Activated CD4-positive, alpha-beta T cell treated with anti-CD3 and anti-CD28 coated beads, Interleukin-2, amount 10 ng/mL, durations not matched to agents 24 days and 14 days (primary cell): ENCODE measurements at regions of chr7 and their contacts with region 1.

Region 1: DNA sequence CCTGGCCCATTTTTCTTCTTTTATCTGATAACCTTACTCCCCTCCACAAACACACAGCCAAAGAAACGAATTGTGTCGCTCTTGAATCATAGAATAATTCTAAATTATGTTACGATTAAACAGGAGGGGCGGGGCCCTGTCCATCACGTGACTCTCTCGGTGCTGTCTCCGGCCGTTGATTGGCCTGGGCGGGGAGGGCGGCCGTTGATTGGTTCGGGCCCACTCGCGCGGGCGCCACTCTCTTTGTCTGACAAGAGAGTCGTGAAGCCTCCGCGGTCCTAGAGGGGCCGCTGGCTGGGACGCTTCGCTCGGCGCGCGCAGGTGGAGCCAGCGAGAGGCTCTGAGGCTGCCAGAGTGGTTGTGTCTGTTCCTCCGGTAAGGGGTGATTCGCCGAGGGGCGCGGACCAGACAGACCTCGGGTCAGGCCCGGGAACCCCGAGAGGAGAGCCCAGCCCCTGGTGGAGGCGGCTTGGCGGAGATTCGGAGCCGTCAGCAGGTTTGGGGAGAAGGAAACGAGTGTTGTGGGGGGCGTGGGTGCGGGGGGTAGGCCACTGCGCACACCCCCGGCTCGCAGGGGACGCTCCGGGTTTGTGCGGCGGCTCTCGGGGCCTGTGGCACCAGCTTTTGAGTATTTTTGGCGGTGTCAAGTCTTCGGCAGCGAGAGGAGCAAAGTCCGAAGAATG is at the start of gene ZNF789:
- DNase-seq: peak; percentile 99
- H3K4me3 Mint-ChIP-seq: peak within 1 kb of the TSS; percentile 100
- H3K27ac Mint-ChIP-seq: peak within 1 kb of the TSS; percentile 93
- H3K4me1 Mint-ChIP-seq: peaks cover 28% of the 10 kb centered on the region
- H3K27me3 Mint-ChIP-seq: peaks cover 1% of the 10 kb centered on the region
- total RNA-seq, gene ZNF789: 22.6 and 23.6 TPM in 2 replicates

Region 2: DNA sequence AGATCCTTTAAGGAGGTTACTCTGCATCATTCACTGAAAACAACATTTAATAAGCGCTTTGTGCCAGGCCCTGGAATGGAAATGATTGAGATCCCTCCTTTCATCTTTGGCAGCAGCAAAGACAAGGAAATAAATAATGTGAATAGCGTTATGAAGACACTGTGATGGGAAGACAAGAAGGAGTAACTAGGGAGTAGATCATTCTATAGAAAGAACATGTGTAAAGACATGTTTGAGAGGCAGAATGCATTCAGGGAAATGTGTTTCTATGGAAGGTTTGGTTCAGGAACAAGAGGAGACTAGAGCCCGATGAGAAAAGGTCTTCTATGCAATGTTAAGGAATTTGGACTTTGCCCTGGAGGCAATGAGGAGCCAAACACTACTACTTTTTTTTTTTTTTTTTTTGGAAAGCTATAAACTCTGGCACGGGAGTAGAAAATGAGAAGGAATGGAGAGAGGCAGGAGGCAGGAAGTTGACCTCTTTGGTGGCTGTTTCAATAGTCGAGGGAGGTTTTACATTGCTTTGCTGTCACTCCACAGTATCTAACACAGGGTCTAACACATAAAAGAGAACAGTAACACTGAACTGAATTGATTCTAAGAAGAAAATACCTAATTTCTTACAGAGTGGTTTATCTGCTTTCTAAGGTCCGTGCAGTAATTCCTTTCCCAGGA is 373.7 kb before region 1 on chr7:
- intact Hi-C with region 1: no loop called
- DNase-seq: no peak
- H3K4me3 Mint-ChIP-seq: no peak overlapping the region
- H3K27ac Mint-ChIP-seq: no peak overlapping the region
- H3K4me1 Mint-ChIP-seq: peaks cover 13% of the 10 kb centered on the region
- H3K27me3 Mint-ChIP-seq: no peaks in the 10 kb centered on the region

Region 3: DNA sequence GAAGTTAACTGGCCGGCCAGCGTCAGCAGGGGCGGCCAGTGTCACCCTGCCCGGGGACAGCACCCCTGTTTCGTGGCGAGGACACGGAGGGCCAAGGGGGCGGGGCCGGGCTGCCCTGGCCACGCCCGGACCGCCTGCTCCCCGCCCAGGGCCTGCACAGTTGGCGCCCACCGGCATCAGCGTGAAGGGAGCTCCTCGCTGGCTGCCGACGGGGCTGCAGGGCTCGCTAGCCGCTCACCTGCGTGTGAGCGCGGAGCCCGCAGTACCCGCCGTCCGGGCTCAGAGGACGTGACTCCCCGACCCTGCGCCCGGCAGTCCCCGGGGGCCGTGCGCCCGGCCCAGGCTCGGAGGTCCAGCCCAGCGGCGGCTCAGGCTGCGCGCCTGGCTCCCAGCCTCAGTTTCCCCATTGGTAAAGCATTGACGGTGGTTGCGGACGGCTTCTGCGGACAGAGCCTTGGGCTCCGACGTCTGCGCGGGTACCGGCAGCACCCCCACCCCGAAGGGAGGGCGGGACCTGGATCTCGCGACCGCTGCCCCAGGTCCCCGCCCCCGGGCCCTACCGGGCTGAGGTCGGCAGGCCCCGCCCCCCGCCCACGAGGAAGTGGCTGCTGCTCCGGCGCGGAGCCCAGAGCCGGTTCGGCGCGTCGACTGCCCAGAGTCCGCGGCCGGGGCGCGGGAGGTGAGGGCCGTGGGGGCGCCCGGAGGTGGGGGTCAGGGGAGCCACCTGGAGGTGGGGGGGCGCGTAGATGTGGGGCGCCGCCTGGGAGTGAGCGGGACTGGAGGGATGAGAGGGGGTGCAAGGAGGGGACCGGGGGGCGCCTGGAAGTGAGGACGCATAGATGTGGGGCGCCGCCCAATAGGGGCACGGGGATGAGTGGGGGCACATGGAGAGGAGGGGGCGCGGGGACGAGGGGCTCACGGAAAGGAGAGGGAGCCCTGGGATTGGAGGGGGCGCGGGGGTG is 98.3 kb before region 1 on chr7 and contains the start of gene ARPC1B:
- intact Hi-C with region 1: loop called (anchors 5 kb)
- DNase-seq: peak; percentile 94
- H3K4me3 Mint-ChIP-seq: peak within 1 kb of the TSS; percentile 82
- H3K27ac Mint-ChIP-seq: peak within 1 kb of the TSS; percentile 84
- H3K4me1 Mint-ChIP-seq: peaks cover 32% of the 10 kb centered on the region
- H3K27me3 Mint-ChIP-seq: no peaks in the 10 kb centered on the region
- total RNA-seq, gene ARPC1B: 248 and 250 TPM in 2 replicates

Region 4: GRCh38 chr7:99438573-99439480 is 33.9 kb before region 1 on chr7 and contains the starts of genes CPSF4 and PTCD1:
- intact Hi-C with region 1: loop called (anchors 2 kb)
- DNase-seq: peak; percentile 97
- H3K4me3 Mint-ChIP-seq: peak within 1 kb of the TSS; percentile 96
- H3K27ac Mint-ChIP-seq: peak within 1 kb of the TSS; percentile 89
- H3K4me1 Mint-ChIP-seq: peaks cover 23% of the 10 kb centered on the region
- H3K27me3 Mint-ChIP-seq: no peaks in the 10 kb centered on the region
- total RNA-seq, gene CPSF4: 83.5 and 89.0 TPM in 2 replicates
- total RNA-seq, gene PTCD1: 10.5 and 10.7 TPM in 2 replicates

Region 5: GRCh38 chr7:99579956-99580777 is 107.5 kb after region 1 on chr7:
- intact Hi-C with region 1: no loop called
- DNase-seq: peak; percentile 78
- H3K4me3 Mint-ChIP-seq: peak overlapping the region; percentile 89
- H3K27ac Mint-ChIP-seq: peak overlapping the region; percentile 49
- H3K4me1 Mint-ChIP-seq: peaks cover 18% of the 10 kb centered on the region
- H3K27me3 Mint-ChIP-seq: peaks cover 3% of the 10 kb centered on the region